CD4-positive, alpha-beta T cell (primary cell): ENCODE measurements at regions of chr9 and their contacts with region 1.

Region 1: GRCh38 chr9:36190388-36191287 is at the start of gene CLTA:
- DNase-seq: peak; percentile 85 to 98 (median 88)
- ATAC-seq: peak; percentile 98
- H3K4me3 ChIP-seq: peak within 1 kb of the TSS; percentile 62
- H3K4me3 Mint-ChIP-seq: peak within 1 kb of the TSS; percentile 93
- H3K27ac ChIP-seq: peak within 1 kb of the TSS; percentile 74 to 92
- H3K27ac Mint-ChIP-seq: peak within 1 kb of the TSS; percentile 81
- H3K4me1 ChIP-seq: peaks cover 44% of the 10 kb centered on the region
- H3K4me1 Mint-ChIP-seq: peaks cover 48% of the 10 kb centered on the region
- H3K27me3 ChIP-seq: no peaks in the 10 kb centered on the region
- H3K27me3 Mint-ChIP-seq: no peaks in the 10 kb centered on the region
- CTCF ChIP-seq: peak; percentile 74
- total RNA-seq, gene CLTA: 32.0 to 32.8 TPM

Region 2: DNA sequence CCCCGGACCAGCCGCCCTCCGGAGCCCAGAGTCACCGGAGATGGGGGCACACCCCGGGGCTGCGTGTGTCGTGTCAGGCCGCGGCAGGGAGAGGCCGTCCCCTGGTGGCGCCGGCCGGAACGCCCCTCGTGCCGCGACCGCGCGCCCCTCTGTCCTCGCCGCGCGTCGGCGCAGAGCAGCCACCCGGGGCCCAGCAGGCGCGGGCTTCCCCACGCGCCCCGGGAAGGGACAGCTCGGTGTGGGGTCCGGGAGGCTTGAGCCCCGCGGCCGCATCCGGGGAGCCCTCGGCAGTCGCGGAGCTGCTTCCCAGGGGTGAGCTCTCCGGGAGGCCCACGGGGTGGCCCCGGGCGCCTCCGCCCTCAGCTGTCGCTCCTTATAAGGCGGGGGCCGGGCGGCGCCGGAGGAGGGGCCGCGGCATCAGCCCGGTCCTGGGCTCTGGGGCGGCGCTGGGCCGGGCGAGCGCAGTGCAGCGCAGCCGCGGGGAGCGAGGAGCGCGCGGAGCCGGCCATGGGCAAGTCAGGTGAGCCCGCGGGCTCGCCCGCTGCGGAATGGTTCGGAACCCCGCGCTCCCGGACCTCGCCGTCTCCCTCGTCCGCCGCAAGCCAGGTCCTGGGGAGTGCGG is 54.3 kb before region 1 on chr9 and contains the start of gene GLIPR2:
- CTCF ChIA-PET with region 1: interaction called, 5 read pairs
- POLR2A ChIA-PET with region 1: interaction called, 6 read pairs
- intact Hi-C with region 1: loop called in 1 of 2 experiments (anchors 1 kb)
- DNase-seq: peak; percentile 53 to 91 (median 72)
- ATAC-seq: peak; percentile 93
- H3K4me3 ChIP-seq: peak within 1 kb of the TSS; percentile 85
- H3K4me3 Mint-ChIP-seq: peak within 1 kb of the TSS; percentile 98
- H3K27ac ChIP-seq: peak within 1 kb of the TSS; percentile 53 to 59
- H3K27ac Mint-ChIP-seq: peak within 1 kb of the TSS; percentile 92
- H3K4me1 ChIP-seq: peaks cover 53% of the 10 kb centered on the region
- H3K4me1 Mint-ChIP-seq: peaks cover 51% of the 10 kb centered on the region
- H3K27me3 ChIP-seq: no peaks in the 10 kb centered on the region
- H3K27me3 Mint-ChIP-seq: no peaks in the 10 kb centered on the region
- CTCF ChIP-seq: no peak
- total RNA-seq, gene GLIPR2: 13.6 to 13.7 TPM

Region 3: GRCh38 chr9:36166101-36166927 is 24.3 kb before region 1 on chr9:
- CTCF ChIA-PET with region 1: interaction called, 20 read pairs
- POLR2A ChIA-PET with region 1: interaction called, 6 read pairs
- intact Hi-C with region 1: no loop called
- DNase-seq: peak; percentile 57 to 91 (median 78)
- ATAC-seq: peak; percentile 98
- H3K4me3 ChIP-seq: peak overlapping the region; percentile 62
- H3K4me3 Mint-ChIP-seq: peak overlapping the region; percentile 51
- H3K27ac ChIP-seq: no peak overlapping the region
- H3K27ac Mint-ChIP-seq: no peak overlapping the region
- H3K4me1 ChIP-seq: peaks cover 15% of the 10 kb centered on the region
- H3K4me1 Mint-ChIP-seq: no peaks in the 10 kb centered on the region
- H3K27me3 ChIP-seq: no peaks in the 10 kb centered on the region
- H3K27me3 Mint-ChIP-seq: no peaks in the 10 kb centered on the region
- CTCF ChIP-seq: peak; percentile 93

Region 4: DNA sequence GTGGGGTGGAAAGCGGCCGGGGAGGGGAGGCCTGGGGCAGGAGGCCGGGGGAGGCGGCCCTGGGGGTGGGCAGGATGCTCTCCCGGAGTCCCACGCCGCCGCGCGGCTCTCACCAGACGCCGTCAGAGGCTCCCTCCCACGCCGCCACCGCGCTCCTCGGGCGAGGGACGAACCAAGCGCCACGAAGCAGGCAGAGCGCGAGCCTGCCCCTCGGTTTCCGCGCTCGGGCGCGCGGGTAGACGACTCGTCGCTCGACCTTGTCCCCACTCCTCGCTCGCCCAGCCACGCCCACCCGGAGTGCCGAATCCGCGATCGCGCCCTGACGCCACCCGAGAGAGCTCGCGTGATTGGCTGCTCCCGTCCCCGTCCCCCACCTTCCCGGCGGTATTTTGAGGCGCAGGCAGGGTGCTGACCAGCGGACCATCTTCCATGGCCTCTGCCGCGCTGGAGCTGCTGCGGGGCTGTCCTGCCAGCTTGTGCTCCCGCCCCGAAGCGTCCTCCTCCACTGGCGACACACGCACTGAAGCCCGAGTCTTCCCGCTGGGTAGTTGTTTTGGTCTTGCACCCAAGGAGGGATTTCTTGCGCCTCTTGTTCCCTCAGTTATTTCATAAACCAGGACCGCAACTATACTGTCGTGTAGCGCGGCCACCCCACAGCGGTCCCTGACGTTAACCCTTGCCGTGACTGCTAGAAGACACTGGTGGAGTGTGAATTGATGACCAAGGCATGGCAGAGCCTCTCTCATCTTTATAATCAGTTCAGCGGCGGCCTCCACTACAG is 67.8 kb after region 1 on chr9 and contains the start of gene GNE:
- CTCF ChIA-PET with region 1: no interaction called
- POLR2A ChIA-PET with region 1: interaction called, 17 read pairs
- intact Hi-C with region 1: loop called (anchors 2 to 5 kb)
- DNase-seq: peak; percentile 94 to 98 (median 97)
- ATAC-seq: peak; percentile 89
- H3K4me3 ChIP-seq: peak within 1 kb of the TSS; percentile 66
- H3K4me3 Mint-ChIP-seq: peak within 1 kb of the TSS; percentile 99
- H3K27ac ChIP-seq: peak within 1 kb of the TSS; percentile 88 to 93
- H3K27ac Mint-ChIP-seq: peak within 1 kb of the TSS; percentile 91
- H3K4me1 ChIP-seq: peaks cover 19% of the 10 kb centered on the region
- H3K4me1 Mint-ChIP-seq: peaks cover 6% of the 10 kb centered on the region
- H3K27me3 ChIP-seq: no peaks in the 10 kb centered on the region
- H3K27me3 Mint-ChIP-seq: no peaks in the 10 kb centered on the region
- CTCF ChIP-seq: no peak
- total RNA-seq, gene GNE: 12.5 to 14.6 TPM

Region 5: DNA sequence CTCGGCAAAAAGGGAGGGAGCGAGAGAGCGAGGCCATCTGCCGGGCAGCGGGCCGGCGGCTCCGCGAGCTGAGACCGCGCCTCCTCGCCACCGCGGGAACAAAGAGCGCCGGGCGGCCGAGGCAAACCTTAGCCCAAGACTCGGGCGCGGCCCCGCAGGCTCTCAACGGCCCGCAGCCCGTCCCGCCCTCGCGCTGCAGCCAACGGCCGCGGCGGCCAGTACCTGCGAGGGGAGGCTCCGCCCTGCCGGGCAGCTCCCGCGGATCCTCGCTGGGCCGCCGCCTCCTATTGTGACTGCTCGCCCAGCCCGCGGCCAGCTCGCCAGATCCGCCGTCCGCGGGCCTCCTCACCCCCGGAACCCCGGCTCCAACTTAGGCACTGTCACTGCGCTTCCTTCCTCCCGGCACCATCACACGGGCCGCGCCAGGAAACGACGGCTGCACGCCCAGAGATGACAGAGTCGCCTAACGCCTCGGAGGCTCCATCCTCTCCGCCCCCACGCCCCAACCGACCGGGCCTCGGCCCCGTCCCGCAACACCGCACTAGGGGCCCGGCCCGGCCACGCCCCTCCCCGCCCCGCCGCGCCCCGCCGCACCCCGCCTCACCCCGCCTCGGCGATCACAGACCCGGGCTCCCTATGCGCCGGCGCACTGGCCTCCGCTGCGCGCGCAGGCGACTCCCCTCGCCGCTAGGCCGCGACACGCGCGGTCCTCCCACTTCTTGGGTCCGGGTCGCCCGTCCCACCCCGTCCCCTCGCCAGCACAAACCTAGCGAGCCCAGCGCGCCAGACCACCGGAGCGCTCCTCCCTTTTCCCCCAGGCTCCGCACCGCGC is 209.9 kb after region 1 on chr9:
- CTCF ChIA-PET with region 1: no interaction called
- POLR2A ChIA-PET with region 1: interaction called, 4 read pairs
- intact Hi-C with region 1: loop called in 1 of 2 experiments (anchors 2 kb)
- DNase-seq: peak; percentile 80 to 96 (median 90)
- ATAC-seq: peak; percentile 74
- H3K4me3 ChIP-seq: peak overlapping the region; percentile 75
- H3K4me3 Mint-ChIP-seq: peak overlapping the region; percentile 92
- H3K27ac ChIP-seq: peak overlapping the region; percentile 88 to 98
- H3K27ac Mint-ChIP-seq: peak overlapping the region; percentile 94
- H3K4me1 ChIP-seq: peaks cover 18% of the 10 kb centered on the region
- H3K4me1 Mint-ChIP-seq: peaks cover 54% of the 10 kb centered on the region
- H3K27me3 ChIP-seq: no peaks in the 10 kb centered on the region
- H3K27me3 Mint-ChIP-seq: no peaks in the 10 kb centered on the region
- CTCF ChIP-seq: no peak

Region 6: GRCh38 chr9:36891341-36891959 is 700.8 kb after region 1 on chr9:
- CTCF ChIA-PET with region 1: no interaction called
- POLR2A ChIA-PET with region 1: no interaction called
- intact Hi-C with region 1: no loop called
- DNase-seq: peak in 1 of 14 experiments; percentile 15
- ATAC-seq: no peak
- H3K4me3 ChIP-seq: no peak overlapping the region
- H3K4me3 Mint-ChIP-seq: no peak overlapping the region
- H3K27ac ChIP-seq: no peak overlapping the region
- H3K27ac Mint-ChIP-seq: no peak overlapping the region
- H3K4me1 ChIP-seq: no peaks in the 10 kb centered on the region
- H3K4me1 Mint-ChIP-seq: no peaks in the 10 kb centered on the region
- H3K27me3 ChIP-seq: no peaks in the 10 kb centered on the region
- H3K27me3 Mint-ChIP-seq: peaks cover 22% of the 10 kb centered on the region
- CTCF ChIP-seq: no peak